ENCODE measurements at regions of chr10 and their contacts with region 1.

Region 1: GRCh38 chr10:93080350-93081046 is 6.8 kb downstream of the CYP26A1 start:
- DNase-seq: peak in 3 of 5 donors; percentile 22 to 52 (median 29)
- H3K4me3 ChIP-seq: no peak overlapping the region
- H3K27ac ChIP-seq: no peak overlapping the region
- H3K4me1 ChIP-seq: no peaks in the 10 kb centered on the region
- H3K27me3 ChIP-seq: no peaks in the 10 kb centered on the region
- CTCF ChIP-seq: peak; percentile 28 to 58 (median 37)
- EP300 ChIP-seq: no peak
- POLR2A ChIP-seq: no peak

Region 2: DNA sequence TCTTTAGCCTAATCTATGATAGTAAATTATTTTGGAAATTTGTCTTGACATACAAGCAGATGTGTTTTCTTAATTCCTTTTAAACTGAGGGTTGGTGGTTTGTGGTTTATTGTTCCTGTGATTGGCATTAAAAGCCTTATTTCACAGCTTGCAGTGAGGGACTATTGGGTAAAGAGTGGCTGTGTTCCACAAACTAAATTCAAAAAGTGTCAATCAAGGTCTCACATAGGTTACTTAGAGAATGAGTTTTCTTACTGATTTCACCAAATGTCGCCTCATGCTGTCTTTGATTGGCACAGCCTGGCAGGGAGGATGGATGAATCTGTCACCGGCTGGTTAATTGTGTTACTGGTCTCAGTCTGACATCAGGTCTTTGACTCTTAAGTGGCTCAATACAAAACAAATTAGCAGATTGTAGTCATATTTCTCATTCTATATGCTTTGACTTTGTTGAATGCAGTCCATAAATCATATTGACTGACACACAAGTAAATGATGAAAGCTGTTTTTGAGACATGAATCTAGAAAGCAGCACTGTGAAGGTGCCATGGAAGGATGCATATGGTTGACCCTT is 86.7 kb before region 1 on chr10:
- intact Hi-C with region 1: no loop called
- DNase-seq: no peak
- H3K4me3 ChIP-seq: no peak overlapping the region
- H3K27ac ChIP-seq: no peak overlapping the region
- H3K4me1 ChIP-seq: no peaks in the 10 kb centered on the region
- H3K27me3 ChIP-seq: no peaks in the 10 kb centered on the region
- CTCF ChIP-seq: no peak
- EP300 ChIP-seq: no peak
- POLR2A ChIP-seq: no peak

Region 3: DNA sequence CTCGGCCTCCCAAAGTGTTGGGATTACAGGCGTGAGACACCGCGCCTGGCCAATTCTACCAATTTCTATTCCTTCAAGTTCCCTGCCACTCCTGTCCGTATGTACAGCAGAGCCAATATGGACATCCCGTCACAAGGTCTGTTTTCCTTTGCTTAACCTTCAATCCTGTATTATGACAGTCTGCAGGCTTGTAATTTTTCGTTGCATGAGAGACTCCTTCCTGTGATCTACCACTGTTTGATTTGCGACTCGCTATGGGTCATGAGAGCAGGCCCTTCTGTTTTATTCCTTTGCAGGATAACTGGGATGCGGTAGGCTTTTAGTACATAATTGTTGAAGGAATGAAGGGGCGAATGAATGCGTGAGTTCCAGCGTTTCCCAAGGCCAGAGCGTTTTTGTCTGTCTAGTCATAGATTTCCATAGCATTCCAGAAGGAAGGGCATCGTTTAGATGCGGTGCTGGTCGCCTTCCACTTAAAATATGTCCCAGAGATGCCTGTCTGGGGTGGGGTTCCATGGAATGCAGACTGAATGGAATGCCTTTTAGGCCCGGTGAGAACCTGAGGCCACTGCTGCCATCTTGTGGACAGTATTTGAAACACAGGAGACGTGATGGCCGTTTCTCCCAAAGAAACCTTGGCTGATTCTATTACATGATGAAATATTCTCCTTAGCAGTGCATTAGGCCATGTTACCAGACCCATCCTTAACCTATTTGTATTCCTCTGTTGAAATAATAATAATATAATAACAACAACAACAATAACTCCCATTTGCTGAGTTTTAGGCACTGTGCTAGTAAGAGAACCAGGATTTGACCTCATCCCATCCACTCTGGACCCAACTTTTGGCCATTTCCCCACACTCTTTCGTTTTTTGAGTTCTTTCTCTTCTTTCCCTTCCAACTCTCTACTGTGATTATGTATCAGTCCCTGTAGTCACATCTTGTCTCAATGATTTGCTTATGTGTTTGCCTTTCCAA is 208.4 kb after region 1 on chr10:
- intact Hi-C with region 1: loop called in 3 of 4 experiments (anchors 5 to 10 kb)
- DNase-seq: peak; percentile 40 to 71 (median 61)
- H3K4me3 ChIP-seq: no peak overlapping the region
- H3K27ac ChIP-seq: no peak overlapping the region
- H3K4me1 ChIP-seq: no peaks in the 10 kb centered on the region
- H3K27me3 ChIP-seq: no peaks in the 10 kb centered on the region
- CTCF ChIP-seq: peak; percentile 28 to 53 (median 33)
- EP300 ChIP-seq: no peak
- POLR2A ChIP-seq: no peak

Region 4: GRCh38 chr10:93352638-93353383 is 272.3 kb after region 1 on chr10:
- intact Hi-C with region 1: loop called in 1 of 4 experiments (anchors 10 kb)
- DNase-seq: no peak
- H3K4me3 ChIP-seq: no peak overlapping the region
- H3K27ac ChIP-seq: no peak overlapping the region
- H3K4me1 ChIP-seq: no peaks in the 10 kb centered on the region
- H3K27me3 ChIP-seq: no peaks in the 10 kb centered on the region
- CTCF ChIP-seq: peak in 2 of 3 donors; percentile 45 to 53
- EP300 ChIP-seq: no peak
- POLR2A ChIP-seq: no peak

Measured in ovary (tissue), 10 donors.